ENCODE measurements at regions of chr3 and their contacts with region 1.

Region 1: DNA sequence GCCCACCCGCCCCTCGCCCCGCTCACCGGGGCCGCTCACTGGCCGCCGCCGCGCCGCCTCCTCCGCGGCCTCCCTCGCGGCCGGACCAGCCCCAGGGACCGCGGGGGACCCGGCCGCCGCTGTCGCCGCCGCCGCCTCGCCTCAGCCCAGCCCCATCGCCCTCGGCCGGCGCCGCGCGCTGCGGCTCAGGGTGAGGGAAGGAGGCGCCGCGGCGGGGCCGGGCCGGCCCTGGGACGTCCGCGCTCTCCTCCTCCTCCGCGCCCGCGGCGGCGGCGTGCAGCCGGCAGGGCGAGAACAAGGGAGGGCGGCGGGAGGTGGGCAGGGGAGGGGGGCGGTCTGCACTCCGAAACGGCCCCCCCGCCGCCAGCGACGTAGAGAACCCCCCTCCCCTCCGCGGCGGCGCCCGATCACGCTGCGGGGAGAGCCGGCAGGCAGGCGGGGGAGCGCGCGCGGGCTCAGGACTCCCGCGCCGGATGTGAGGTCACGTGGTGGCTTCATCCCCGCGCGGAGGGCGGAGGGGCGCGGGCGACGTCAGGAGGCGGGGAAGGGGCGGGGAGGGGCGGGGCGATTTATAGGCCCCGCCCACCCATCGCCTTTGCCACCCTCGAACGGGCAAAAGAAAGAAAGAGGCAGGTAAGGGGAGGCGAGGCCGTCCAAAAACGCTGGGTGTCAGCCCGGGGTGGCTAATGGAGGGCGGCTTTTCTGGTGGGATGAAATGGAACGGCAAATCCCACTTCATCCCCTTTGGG is at the start of gene ATP13A3:
- DNase-seq: peak; percentile 57 to 95
- H3K4me3 ChIP-seq: peak within 1 kb of the TSS; percentile 68 to 75
- H3K27ac ChIP-seq: peak within 1 kb of the TSS; percentile 91 to 95
- H3K4me1 ChIP-seq: peaks cover 21 to 35% of the 10 kb centered on the region in 2 donors
- H3K27me3 ChIP-seq: no peaks in the 10 kb centered on the region
- CTCF ChIP-seq: no peak
- total RNA-seq, gene ATP13A3: 53.6 TPM

Region 2: GRCh38 chr3:194536871-194537637 is 50.3 kb after region 1 on chr3:
- intact Hi-C with region 1: loop called (anchors 5 kb)
- DNase-seq: peak in 1 of 2 donors; percentile 74
- H3K4me3 ChIP-seq: no peak overlapping the region
- H3K27ac ChIP-seq: peak overlapping the region; percentile 78 to 87
- H3K4me1 ChIP-seq: peaks cover 5 to 11% of the 10 kb centered on the region in 2 donors
- H3K27me3 ChIP-seq: no peaks in the 10 kb centered on the region
- CTCF ChIP-seq: no peak

Region 3: GRCh38 chr3:194573691-194574437 is 87.2 kb after region 1 on chr3:
- intact Hi-C with region 1: loop called (anchors 1 kb)
- DNase-seq: peak in 1 of 2 donors; percentile 77
- H3K4me3 ChIP-seq: no peak overlapping the region
- H3K27ac ChIP-seq: peak overlapping the region; percentile 86 to 94
- H3K4me1 ChIP-seq: peaks cover 8 to 35% of the 10 kb centered on the region in 2 donors
- H3K27me3 ChIP-seq: no peaks in the 10 kb centered on the region
- CTCF ChIP-seq: peak; percentile 54 to 61 (median 59)

Region 4: GRCh38 chr3:194583604-194584318 is 97.0 kb after region 1 on chr3:
- intact Hi-C with region 1: loop called (anchors 2 kb)
- DNase-seq: peak; percentile 54 to 93
- H3K4me3 ChIP-seq: peak overlapping the region; percentile 79 to 83
- H3K27ac ChIP-seq: peak overlapping the region; percentile 96 to 97
- H3K4me1 ChIP-seq: peaks cover 15 to 46% of the 10 kb centered on the region in 2 donors
- H3K27me3 ChIP-seq: no peaks in the 10 kb centered on the region
- CTCF ChIP-seq: peak in 1 of 3 experiments; percentile 6

Region 5: DNA sequence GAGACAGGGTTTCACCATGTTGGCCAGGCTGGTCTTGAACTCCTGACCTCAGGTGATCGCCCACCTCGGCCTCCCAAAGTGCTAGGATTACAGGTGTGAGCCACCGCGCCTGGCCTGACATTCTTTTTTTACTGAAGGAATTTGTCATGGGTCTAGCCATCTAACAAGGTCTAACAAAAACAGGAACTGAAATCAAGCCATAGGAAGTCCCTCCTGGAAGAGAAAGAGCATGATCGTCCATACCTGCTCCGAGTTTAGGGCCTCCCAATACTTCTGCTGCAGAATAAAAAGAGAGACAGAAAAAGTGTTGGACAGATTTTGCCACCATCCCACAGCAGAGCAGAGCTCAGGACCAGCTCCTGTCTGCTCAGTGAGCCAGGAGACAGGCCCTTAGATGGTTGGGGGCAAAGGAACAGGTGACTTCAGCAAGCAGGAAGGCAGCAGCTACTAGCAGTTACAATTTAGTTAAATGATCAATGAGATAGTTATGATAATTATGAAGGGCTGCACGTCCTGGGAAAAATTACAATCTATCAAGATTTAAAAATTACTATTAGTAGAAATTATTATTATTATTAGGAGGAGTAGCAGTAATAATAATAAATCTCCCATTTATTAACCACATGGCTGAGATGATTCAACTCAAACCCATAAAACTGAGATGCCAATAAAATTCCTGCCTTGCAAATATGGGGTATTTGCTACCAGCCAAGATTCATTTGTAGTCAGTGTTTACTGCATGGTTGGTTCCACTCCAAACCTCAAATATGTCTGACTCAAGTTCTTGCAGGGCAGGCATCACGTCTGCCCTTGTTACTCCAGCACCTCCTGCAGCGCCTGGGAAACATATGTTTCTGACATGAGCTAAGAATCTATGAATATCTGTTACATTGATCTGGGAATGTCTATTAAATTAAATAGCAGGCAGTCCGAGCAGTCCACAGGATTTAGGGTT is 106.4 kb after region 1 on chr3:
- intact Hi-C with region 1: loop called (anchors 2 kb)
- DNase-seq: peak in 1 of 2 donors; percentile 83
- H3K4me3 ChIP-seq: no peak overlapping the region
- H3K27ac ChIP-seq: peak overlapping the region; percentile 72 to 83
- H3K4me1 ChIP-seq: peaks cover 2 to 12% of the 10 kb centered on the region in 2 donors
- H3K27me3 ChIP-seq: no peaks in the 10 kb centered on the region
- CTCF ChIP-seq: no peak